ENCODE measurements at regions of chr6 and their contacts with region 1.

Region 1: GRCh38 chr6:13194852-13195251 is 133.5 kb downstream of the TBC1D7 start:
- DNase-seq: peak; percentile 80
- ATAC-seq: peak; percentile 70
- H3K4me3 ChIP-seq: no peak overlapping the region
- H3K4me3 Mint-ChIP-seq: no peak overlapping the region
- H3K27ac ChIP-seq: no peak overlapping the region
- H3K27ac Mint-ChIP-seq: peak overlapping the region; percentile 70
- H3K4me1 ChIP-seq: peaks cover 7 to 14% of the 10 kb centered on the region in 2 donors
- H3K4me1 Mint-ChIP-seq: peaks cover 13% of the 10 kb centered on the region
- H3K27me3 ChIP-seq: no peaks in the 10 kb centered on the region
- H3K27me3 Mint-ChIP-seq: peaks cover 13% of the 10 kb centered on the region
- CTCF ChIP-seq: peak; percentile 73

Region 2: DNA sequence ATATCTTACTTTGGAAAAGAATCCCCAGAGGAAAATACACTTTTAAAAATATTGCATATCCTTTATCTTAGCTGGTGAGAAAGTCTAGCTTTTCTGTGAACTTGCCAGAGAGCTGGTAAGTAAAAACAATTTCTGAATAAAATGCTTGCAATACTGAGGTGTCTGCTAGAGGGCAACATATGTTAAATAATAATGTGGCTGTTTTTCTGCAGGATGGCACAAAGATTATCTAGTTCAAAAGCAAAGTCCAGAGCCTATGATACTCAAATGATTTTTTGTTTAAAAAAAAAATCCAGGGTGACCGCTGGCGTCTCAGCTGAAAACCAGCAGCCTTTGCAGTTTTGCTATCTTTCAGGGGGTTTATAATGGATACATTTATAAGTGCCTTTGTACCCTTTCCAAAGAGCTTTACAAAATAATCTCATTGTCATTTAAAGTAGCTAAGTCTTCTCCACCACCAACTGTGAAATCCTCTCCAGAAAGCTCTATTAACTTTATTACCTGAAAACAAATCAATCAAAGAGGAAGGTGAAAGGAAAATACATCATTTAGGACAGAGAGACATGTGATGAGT is 283.4 kb before region 1 on chr6:
- CTCF ChIA-PET with region 1: interaction called, 10 read pairs
- POLR2A ChIA-PET with region 1: no interaction called
- intact Hi-C with region 1: no loop called
- DNase-seq: peak; percentile 42
- ATAC-seq: no peak
- H3K4me3 ChIP-seq: no peak overlapping the region
- H3K4me3 Mint-ChIP-seq: no peak overlapping the region
- H3K27ac ChIP-seq: no peak overlapping the region
- H3K27ac Mint-ChIP-seq: no peak overlapping the region
- H3K4me1 ChIP-seq: peaks cover 0 to 5% of the 10 kb centered on the region in 2 donors
- H3K4me1 Mint-ChIP-seq: peaks cover 5% of the 10 kb centered on the region
- H3K27me3 ChIP-seq: no peaks in the 10 kb centered on the region
- H3K27me3 Mint-ChIP-seq: peaks cover 9% of the 10 kb centered on the region
- CTCF ChIP-seq: peak; percentile 60

Region 3: GRCh38 chr6:12967686-12968085 is 227.2 kb before region 1 on chr6:
- CTCF ChIA-PET with region 1: no interaction called
- POLR2A ChIA-PET with region 1: no interaction called
- intact Hi-C with region 1: no loop called
- DNase-seq: no peak
- ATAC-seq: no peak
- H3K4me3 ChIP-seq: no peak overlapping the region
- H3K4me3 Mint-ChIP-seq: no peak overlapping the region
- H3K27ac ChIP-seq: no peak overlapping the region
- H3K27ac Mint-ChIP-seq: no peak overlapping the region
- H3K4me1 ChIP-seq: peaks cover 7 to 8% of the 10 kb centered on the region in 2 donors
- H3K4me1 Mint-ChIP-seq: peaks cover 9% of the 10 kb centered on the region
- H3K27me3 ChIP-seq: peaks cover 0 to 3% (median 0%) of the 10 kb centered on the region in 4 experiments
- H3K27me3 Mint-ChIP-seq: peaks cover 39% of the 10 kb centered on the region
- CTCF ChIP-seq: no peak

Region 4: GRCh38 chr6:13261464-13261994 is 66.7 kb after region 1 on chr6:
- CTCF ChIA-PET with region 1: interaction called, 42 read pairs
- POLR2A ChIA-PET with region 1: no interaction called
- intact Hi-C with region 1: no loop called
- DNase-seq: peak; percentile 91
- ATAC-seq: peak; percentile 76
- H3K4me3 ChIP-seq: peak overlapping the region; percentile 25 to 55 (median 36)
- H3K4me3 Mint-ChIP-seq: peak overlapping the region; percentile 75
- H3K27ac ChIP-seq: peak overlapping the region; percentile 93
- H3K27ac Mint-ChIP-seq: peak overlapping the region; percentile 86
- H3K4me1 ChIP-seq: peaks cover 73 to 87% of the 10 kb centered on the region in 2 donors
- H3K4me1 Mint-ChIP-seq: peaks cover 89% of the 10 kb centered on the region
- H3K27me3 ChIP-seq: no peaks in the 10 kb centered on the region
- H3K27me3 Mint-ChIP-seq: no peaks in the 10 kb centered on the region
- CTCF ChIP-seq: no peak

Region 5: DNA sequence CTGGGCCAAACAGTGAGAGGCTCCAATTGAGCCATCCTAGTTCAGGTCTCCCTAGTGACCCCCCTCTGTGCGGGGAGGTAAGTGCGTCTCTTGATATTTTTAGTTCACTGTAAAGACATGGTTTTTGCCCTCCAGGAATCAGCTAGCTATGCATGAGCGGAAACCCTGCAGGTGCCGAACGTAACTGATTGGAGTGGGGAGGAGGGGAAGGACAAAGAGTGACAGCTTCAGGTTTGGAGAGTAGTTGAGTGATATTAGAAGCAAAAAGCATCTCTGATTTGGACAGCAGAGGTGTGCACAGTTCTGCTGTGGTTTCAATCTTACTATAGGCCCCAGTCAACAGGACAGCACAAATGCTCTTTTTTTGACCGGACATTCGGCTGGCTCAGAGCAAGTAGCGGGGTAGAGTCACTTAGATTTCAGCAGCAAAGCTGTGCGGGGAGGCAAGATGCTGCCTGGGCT is 101.7 kb after region 1 on chr6:
- CTCF ChIA-PET with region 1: interaction called, 45 read pairs
- POLR2A ChIA-PET with region 1: no interaction called
- intact Hi-C with region 1: no loop called
- DNase-seq: peak; percentile 44
- ATAC-seq: peak; percentile 19
- H3K4me3 ChIP-seq: no peak overlapping the region
- H3K4me3 Mint-ChIP-seq: peak overlapping the region; percentile 53
- H3K27ac ChIP-seq: no peak overlapping the region
- H3K27ac Mint-ChIP-seq: peak overlapping the region; percentile 68
- H3K4me1 ChIP-seq: peaks cover 15 to 26% of the 10 kb centered on the region in 2 donors
- H3K4me1 Mint-ChIP-seq: peaks cover 70% of the 10 kb centered on the region
- H3K27me3 ChIP-seq: no peaks in the 10 kb centered on the region
- H3K27me3 Mint-ChIP-seq: no peaks in the 10 kb centered on the region
- CTCF ChIP-seq: peak; percentile 40

Region 6: DNA sequence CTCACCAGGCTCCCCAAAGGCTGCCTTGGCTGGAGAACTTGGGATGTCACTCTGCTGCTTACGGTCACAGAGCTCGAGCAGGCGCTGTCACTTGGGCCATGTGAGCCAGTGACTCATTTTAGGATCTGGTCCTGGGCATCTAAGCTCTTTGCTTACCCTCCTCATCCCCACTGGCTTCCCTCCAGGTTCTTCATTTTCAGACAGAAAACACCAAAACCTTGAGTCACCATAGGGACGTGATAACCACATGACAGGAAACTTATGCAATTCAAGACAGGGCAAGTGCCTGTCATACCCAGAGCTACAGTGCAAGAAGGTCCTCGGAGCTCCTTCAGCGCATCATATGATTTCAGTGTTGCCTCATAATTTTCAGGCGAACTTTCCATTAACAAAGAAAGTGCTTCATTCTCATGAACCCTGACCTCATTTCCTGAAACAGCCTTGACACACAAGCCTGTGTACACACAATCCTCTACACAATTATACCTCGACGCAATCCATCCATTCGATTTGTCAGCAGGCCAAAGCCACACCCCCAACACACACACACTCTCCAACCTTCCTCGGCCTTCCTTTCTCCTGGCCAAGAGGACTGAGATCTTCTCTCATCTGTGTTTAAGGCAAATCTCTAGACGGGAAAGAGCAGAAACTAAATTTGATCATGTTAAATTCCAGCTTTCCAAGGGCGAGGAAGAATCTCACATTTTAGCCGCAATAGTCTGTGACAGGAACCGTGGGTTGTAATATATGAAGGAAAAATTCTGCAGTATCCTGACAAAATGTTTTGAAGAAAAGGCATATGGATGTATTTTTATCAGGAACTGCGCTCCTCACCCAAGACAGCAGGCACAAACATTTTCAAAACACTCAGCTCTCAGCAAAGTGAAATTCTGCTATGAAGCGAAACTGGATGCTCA is 108.2 kb after region 1 on chr6:
- CTCF ChIA-PET with region 1: interaction called, 45 read pairs
- POLR2A ChIA-PET with region 1: no interaction called
- intact Hi-C with region 1: no loop called
- DNase-seq: peak; percentile 69
- ATAC-seq: peak; percentile 40
- H3K4me3 ChIP-seq: peak overlapping the region in 3 of 5 experiments; percentile 8 to 33 (median 16)
- H3K4me3 Mint-ChIP-seq: peak overlapping the region; percentile 76
- H3K27ac ChIP-seq: peak overlapping the region; percentile 76 to 78
- H3K27ac Mint-ChIP-seq: peak overlapping the region; percentile 89
- H3K4me1 ChIP-seq: peaks cover 41 to 46% of the 10 kb centered on the region in 2 donors
- H3K4me1 Mint-ChIP-seq: peaks cover 76% of the 10 kb centered on the region
- H3K27me3 ChIP-seq: no peaks in the 10 kb centered on the region
- H3K27me3 Mint-ChIP-seq: no peaks in the 10 kb centered on the region
- CTCF ChIP-seq: no peak

Region 7: DNA sequence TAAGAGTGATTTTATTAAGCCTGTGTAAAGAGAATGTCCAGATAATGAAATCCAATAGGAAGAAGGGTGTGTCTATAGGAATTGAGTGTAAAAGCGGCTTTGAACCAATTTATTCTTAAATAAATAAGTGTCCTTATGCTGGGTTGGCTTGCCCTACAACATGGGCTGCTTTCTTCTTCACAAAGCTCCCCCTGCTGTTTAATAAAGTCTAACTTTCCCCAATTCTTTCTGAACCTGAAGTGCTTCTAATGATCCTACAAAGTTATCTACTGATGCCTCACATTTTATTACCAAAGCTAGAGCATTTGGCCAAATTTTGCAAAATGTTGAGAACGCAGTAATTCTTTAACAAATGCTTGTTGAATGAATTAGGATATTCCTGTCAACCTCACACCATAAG is 343.2 kb after region 1 on chr6:
- CTCF ChIA-PET with region 1: interaction called, 5 read pairs
- POLR2A ChIA-PET with region 1: no interaction called
- intact Hi-C with region 1: loop called (anchors 10 kb)
- DNase-seq: peak; percentile 64
- ATAC-seq: peak; percentile 56
- H3K4me3 ChIP-seq: no peak overlapping the region
- H3K4me3 Mint-ChIP-seq: no peak overlapping the region
- H3K27ac ChIP-seq: no peak overlapping the region
- H3K27ac Mint-ChIP-seq: no peak overlapping the region
- H3K4me1 ChIP-seq: peaks cover 6 to 8% of the 10 kb centered on the region in 2 donors
- H3K4me1 Mint-ChIP-seq: peaks cover 17% of the 10 kb centered on the region
- H3K27me3 ChIP-seq: no peaks in the 10 kb centered on the region
- H3K27me3 Mint-ChIP-seq: no peaks in the 10 kb centered on the region
- CTCF ChIP-seq: peak; percentile 54

Measured in B cell (primary cell).